ENCODE measurements at regions of chr5 and their contacts with region 1.

Region 1: GRCh38 chr5:121949867-121950266 is 11.9 kb upstream of the SRFBP1 start:
- DNase-seq: peak in 4 of 14 experiments; percentile 22 to 34 (median 30)
- ATAC-seq: peak; percentile 49
- H3K4me3 ChIP-seq: no peak overlapping the region
- H3K4me3 Mint-ChIP-seq: no peak overlapping the region
- H3K27ac ChIP-seq: no peak overlapping the region
- H3K27ac Mint-ChIP-seq: no peak overlapping the region
- H3K4me1 ChIP-seq: no peaks in the 10 kb centered on the region
- H3K4me1 Mint-ChIP-seq: no peaks in the 10 kb centered on the region
- H3K27me3 ChIP-seq: peaks cover 0 to 8% of the 10 kb centered on the region in 2 experiments
- H3K27me3 Mint-ChIP-seq: peaks cover 26% of the 10 kb centered on the region
- CTCF ChIP-seq: peak; percentile 40

Region 2: GRCh38 chr5:120655828-120656435 is 1293.9 kb before region 1 on chr5:
- CTCF ChIA-PET with region 1: no interaction called
- POLR2A ChIA-PET with region 1: no interaction called
- intact Hi-C with region 1: loop called in 1 of 2 experiments (anchors 10 kb)
- DNase-seq: no peak
- ATAC-seq: no peak
- H3K4me3 ChIP-seq: no peak overlapping the region
- H3K4me3 Mint-ChIP-seq: no peak overlapping the region
- H3K27ac ChIP-seq: no peak overlapping the region
- H3K27ac Mint-ChIP-seq: no peak overlapping the region
- H3K4me1 ChIP-seq: no peaks in the 10 kb centered on the region
- H3K4me1 Mint-ChIP-seq: no peaks in the 10 kb centered on the region
- H3K27me3 ChIP-seq: no peaks in the 10 kb centered on the region
- H3K27me3 Mint-ChIP-seq: no peaks in the 10 kb centered on the region
- CTCF ChIP-seq: no peak

Region 3: DNA sequence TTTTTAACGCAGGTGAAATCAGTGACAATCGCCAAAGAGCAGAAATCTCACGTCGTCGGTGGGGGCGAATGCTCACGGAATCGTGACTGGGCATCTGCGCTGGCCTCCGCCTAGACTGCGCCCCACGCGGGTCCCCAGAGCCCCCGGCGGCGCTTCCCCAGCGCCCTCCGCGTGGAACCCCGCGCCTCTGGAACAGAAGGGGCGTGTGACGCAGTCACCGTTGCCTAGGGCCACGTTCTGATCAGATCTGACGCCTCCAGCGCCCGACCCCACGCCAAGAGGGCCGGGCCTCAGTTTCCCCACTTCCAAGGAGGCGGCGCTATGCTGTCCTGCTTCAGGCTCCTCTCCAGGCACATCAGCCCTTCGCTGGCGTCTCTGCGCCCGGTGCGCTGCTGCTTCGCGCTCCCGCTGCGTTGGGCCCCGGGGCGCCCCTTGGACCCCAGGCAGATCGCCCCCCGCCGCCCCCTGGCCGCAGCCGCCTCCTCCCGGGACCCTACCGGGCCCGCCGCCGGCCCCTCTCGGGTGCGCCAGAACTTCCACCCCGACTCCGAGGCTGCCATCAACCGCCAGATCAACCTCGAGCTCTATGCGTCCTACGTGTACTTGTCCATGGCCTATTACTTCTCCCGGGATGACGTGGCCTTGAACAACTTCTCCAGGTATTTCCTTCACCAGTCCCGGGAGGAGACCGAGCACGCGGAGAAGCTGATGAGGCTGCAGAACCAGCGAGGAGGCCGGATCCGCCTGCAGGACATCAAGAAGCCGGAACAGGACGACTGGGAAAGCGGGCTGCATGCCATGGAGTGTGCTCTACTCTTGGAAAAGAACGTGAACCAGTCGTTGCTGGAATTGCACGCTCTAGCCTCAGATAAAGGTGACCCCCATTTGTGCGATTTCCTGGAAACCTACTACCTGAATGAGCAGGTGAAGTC is 98.0 kb before region 1 on chr5 and contains the start of gene FTMT:
- CTCF ChIA-PET with region 1: no interaction called
- POLR2A ChIA-PET with region 1: no interaction called
- intact Hi-C with region 1: no loop called
- DNase-seq: peak in 1 of 14 experiments; percentile 4
- ATAC-seq: no peak
- H3K4me3 ChIP-seq: no peak within 1 kb of the TSS
- H3K4me3 Mint-ChIP-seq: no peak within 1 kb of the TSS
- H3K27ac ChIP-seq: no peak within 1 kb of the TSS
- H3K27ac Mint-ChIP-seq: no peak within 1 kb of the TSS
- H3K4me1 ChIP-seq: no peaks in the 10 kb centered on the region
- H3K4me1 Mint-ChIP-seq: no peaks in the 10 kb centered on the region
- H3K27me3 ChIP-seq: no peaks in the 10 kb centered on the region
- H3K27me3 Mint-ChIP-seq: no peaks in the 10 kb centered on the region
- CTCF ChIP-seq: no peak
- total RNA-seq, gene FTMT: not detected

Region 4: DNA sequence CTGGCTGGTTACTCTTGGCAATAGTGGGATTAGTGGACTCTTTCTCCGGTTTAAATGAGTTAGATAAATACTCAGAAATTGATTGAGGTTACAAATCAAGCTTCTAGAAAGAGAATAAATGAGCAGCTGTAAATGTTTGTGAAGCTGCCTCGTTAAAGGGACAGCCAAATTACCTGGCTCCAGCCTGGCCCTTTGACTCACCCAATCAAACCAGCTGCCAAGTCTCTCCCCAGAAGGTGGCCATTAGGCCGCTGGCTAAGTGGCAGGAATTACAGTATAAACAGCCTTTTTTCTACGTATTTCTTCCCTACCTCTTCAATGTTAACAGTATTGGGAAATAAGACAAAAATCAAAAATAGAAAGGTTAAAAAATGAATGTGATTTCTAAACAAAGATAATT is 34.1 kb before region 1 on chr5:
- CTCF ChIA-PET with region 1: no interaction called
- POLR2A ChIA-PET with region 1: no interaction called
- intact Hi-C with region 1: no loop called
- DNase-seq: no peak
- ATAC-seq: no peak
- H3K4me3 ChIP-seq: no peak overlapping the region
- H3K4me3 Mint-ChIP-seq: no peak overlapping the region
- H3K27ac ChIP-seq: no peak overlapping the region
- H3K27ac Mint-ChIP-seq: no peak overlapping the region
- H3K4me1 ChIP-seq: no peaks in the 10 kb centered on the region
- H3K4me1 Mint-ChIP-seq: no peaks in the 10 kb centered on the region
- H3K27me3 ChIP-seq: peaks cover 0 to 3% of the 10 kb centered on the region in 2 experiments
- H3K27me3 Mint-ChIP-seq: peaks cover 21% of the 10 kb centered on the region
- CTCF ChIP-seq: no peak

Region 5: DNA sequence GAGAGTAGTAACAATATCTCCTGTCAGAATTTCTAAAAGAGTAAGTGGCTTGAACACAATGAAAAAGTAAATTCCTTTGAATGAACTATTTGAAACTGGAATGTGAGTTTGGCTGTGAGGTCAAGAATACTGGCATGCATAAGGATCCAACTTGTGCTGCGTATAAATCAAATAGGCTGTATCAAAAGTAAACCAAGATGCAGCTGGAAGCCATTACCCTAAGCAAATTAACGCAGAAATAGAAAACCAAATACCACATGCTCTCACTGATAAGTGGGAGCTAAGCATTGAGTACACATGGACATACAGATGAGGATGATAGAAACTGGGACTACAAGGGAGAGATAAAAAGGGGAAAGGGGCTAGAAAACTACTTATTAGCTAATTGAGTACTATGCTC is 12.1 kb before region 1 on chr5:
- CTCF ChIA-PET with region 1: no interaction called
- POLR2A ChIA-PET with region 1: no interaction called
- intact Hi-C with region 1: no loop called
- DNase-seq: no peak
- ATAC-seq: no peak
- H3K4me3 ChIP-seq: no peak overlapping the region
- H3K4me3 Mint-ChIP-seq: no peak overlapping the region
- H3K27ac ChIP-seq: no peak overlapping the region
- H3K27ac Mint-ChIP-seq: no peak overlapping the region
- H3K4me1 ChIP-seq: no peaks in the 10 kb centered on the region
- H3K4me1 Mint-ChIP-seq: no peaks in the 10 kb centered on the region
- H3K27me3 ChIP-seq: peaks cover 3% of the 10 kb centered on the region in 2 experiments
- H3K27me3 Mint-ChIP-seq: peaks cover 46% of the 10 kb centered on the region
- CTCF ChIP-seq: no peak

Region 6: GRCh38 chr5:122286541-122286940 is 336.7 kb after region 1 on chr5:
- CTCF ChIA-PET with region 1: no interaction called
- POLR2A ChIA-PET with region 1: no interaction called
- intact Hi-C with region 1: no loop called
- DNase-seq: no peak
- ATAC-seq: no peak
- H3K4me3 ChIP-seq: no peak overlapping the region
- H3K4me3 Mint-ChIP-seq: no peak overlapping the region
- H3K27ac ChIP-seq: no peak overlapping the region
- H3K27ac Mint-ChIP-seq: no peak overlapping the region
- H3K4me1 ChIP-seq: no peaks in the 10 kb centered on the region
- H3K4me1 Mint-ChIP-seq: no peaks in the 10 kb centered on the region
- H3K27me3 ChIP-seq: no peaks in the 10 kb centered on the region
- H3K27me3 Mint-ChIP-seq: no peaks in the 10 kb centered on the region
- CTCF ChIP-seq: no peak